ENCODE measurements at regions of chr10 and their contacts with region 1.

Region 1: DNA sequence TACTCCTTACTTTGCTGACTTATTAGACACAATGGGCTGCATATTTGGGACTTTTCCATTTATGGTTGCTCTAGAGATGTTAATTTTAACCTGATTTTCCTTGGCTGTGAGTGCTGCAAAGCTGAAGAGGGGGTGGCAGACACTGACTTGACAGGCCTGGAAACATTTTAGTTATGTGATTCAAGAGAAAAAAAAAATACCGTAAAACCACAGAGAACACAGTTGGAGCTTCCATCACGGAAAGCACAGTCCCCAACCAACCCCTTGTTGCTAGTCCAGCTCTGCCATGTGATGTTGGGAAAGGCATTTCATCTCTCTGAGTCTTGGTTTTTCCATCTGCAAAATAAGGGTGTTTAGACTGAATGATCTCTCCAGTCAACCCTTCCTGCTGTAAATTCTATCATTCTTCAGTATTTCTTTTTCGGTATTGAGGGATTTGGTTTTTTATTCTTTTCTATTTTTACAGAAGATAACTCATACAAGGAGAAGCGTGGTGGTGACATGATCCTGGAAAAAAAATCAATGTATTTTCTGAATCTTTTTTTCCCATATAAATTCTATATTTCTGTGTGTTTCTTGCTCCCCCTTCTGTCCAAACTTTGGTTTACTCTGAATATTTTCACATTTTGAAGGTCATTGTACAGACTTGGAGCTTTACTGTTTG is 246.1 kb downstream of the REEP3 start:
- DNase-seq: no peak
- ATAC-seq: no peak
- H3K4me3 ChIP-seq: no peak overlapping the region
- H3K27ac ChIP-seq: no peak overlapping the region
- H3K4me1 ChIP-seq: no peaks in the 10 kb centered on the region
- H3K27me3 ChIP-seq: no peaks in the 10 kb centered on the region
- CTCF ChIP-seq: peak; percentile 65; the same call in 1 of the 2 replicates

Region 2: DNA sequence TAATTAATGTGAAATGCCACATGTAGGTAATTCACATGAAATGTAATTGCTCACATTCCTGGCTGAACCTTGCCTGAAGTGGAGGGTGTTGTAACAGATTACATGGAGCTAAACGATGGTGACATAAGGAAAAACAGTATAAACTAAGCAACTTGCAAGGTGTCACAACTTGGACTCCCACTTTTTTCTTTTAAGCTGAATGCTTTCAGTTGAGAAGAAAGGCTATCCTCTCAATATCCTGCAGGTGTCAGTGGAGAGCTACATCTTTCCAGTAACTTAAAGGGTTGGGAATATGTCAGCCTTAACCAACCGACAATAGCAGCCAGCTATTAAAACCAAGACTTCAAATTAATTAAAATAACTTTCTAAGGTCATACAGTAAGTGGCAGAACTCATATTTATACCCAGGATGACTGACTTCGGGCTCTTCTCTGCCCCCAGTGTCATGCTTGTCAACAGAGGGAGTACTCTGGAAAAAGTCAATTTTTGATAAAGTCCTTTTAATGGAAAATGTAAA is 600.5 kb before region 1 on chr10:
- CTCF ChIA-PET with region 1: interaction called, 3 read pairs
- POLR2A ChIA-PET with region 1: no interaction called
- in situ Hi-C with region 1: no loop called
- intact Hi-C with region 1: loop called (anchors 2 kb)
- DNase-seq: peak; percentile 57
- ATAC-seq: peak; percentile 82
- H3K4me3 ChIP-seq: no peak overlapping the region
- H3K27ac ChIP-seq: no peak overlapping the region
- H3K4me1 ChIP-seq: no peaks in the 10 kb centered on the region
- H3K27me3 ChIP-seq: no peaks in the 10 kb centered on the region
- CTCF ChIP-seq: peak; percentile 83

Measured in Panc1 (cell line).